AG04449 (cell line): ENCODE measurements at regions of chr1 and their contacts with region 1.

Region 1: GRCh38 chr1:180863158-180863775 is 49.4 kb upstream of the KIAA1614 start:
- DNase-seq: no peak
- H3K4me3 ChIP-seq: no peak overlapping the region
- CTCF ChIP-seq: peak; percentile 43

Region 2: GRCh38 chr1:180515864-180516388 is 347.3 kb before region 1 on chr1:
- CTCF ChIA-PET with region 1: interaction called, 249 read pairs
- POLR2A ChIA-PET with region 1: interaction called, 4 read pairs
- DNase-seq: no peak
- H3K4me3 ChIP-seq: no peak overlapping the region
- CTCF ChIP-seq: peak; percentile 68

Region 3: DNA sequence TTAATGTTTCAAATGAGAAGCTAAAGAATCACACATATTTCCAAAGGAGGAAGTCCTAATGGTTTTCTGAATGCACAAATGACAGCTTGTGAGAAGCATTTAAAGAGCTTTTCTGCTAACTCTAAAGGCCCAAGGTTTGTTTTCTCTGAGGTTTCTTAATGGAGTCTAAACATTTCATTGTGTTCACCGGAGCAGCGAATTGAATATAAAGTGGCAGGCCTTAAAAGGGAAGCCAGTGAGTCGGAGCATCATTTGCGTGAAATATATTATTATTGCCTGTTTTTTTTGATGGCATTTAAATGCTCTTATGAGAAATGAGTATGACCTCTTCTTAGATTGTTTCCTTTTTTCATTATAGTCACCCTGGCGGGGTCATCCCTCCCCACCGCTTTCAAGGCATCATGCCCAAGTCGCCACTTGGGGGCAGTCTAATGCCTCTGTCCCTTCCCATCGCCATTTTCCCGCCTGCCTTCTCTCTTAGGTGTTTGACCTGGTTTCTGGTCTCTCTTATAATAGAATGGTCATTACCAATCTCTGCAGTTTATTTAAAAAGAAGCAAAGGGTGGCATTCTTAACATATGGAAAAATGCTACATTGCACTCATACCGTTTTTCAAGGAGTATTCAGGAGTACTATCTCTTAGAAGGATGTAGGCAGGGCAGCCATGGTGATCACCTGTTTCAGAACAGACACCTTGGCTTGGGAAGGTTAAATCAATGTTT is 329.8 kb before region 1 on chr1:
- CTCF ChIA-PET with region 1: interaction called, 172 read pairs
- POLR2A ChIA-PET with region 1: no interaction called
- DNase-seq: no peak
- H3K4me3 ChIP-seq: no peak overlapping the region
- CTCF ChIP-seq: peak; percentile 85

Region 4: DNA sequence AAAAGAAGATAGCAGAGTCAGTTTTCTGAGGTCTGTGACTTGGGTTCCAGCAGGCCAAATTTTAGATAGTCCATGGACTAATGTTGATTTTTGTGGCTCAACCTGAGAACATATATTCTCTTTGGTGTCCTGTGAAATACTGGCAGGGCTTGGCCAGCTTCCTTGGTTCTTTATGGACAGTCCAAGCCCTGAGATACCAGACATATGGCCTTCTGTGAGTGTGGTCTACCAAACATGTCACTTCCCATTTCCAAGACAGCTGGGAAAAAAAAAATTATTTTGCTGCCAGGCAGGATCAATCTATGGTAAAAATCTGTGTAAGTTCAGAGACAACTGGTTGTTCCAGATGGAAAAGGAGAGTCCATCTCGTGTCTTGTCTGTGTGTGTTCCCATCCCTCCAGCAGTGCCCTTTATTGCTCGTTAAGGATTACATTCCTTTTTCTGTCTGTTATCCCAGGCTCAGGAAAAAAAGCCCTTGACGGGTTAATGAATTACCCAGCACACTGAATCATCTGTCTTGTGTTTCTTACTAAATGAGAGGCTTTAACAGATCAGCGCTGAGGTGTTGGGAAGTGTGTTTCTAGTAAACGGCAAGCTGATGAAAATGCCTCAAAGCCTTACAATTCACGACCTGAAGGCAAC is 264.8 kb before region 1 on chr1:
- CTCF ChIA-PET with region 1: no interaction called
- POLR2A ChIA-PET with region 1: no interaction called
- DNase-seq: no peak
- H3K4me3 ChIP-seq: no peak overlapping the region
- CTCF ChIP-seq: no peak

Region 5: DNA sequence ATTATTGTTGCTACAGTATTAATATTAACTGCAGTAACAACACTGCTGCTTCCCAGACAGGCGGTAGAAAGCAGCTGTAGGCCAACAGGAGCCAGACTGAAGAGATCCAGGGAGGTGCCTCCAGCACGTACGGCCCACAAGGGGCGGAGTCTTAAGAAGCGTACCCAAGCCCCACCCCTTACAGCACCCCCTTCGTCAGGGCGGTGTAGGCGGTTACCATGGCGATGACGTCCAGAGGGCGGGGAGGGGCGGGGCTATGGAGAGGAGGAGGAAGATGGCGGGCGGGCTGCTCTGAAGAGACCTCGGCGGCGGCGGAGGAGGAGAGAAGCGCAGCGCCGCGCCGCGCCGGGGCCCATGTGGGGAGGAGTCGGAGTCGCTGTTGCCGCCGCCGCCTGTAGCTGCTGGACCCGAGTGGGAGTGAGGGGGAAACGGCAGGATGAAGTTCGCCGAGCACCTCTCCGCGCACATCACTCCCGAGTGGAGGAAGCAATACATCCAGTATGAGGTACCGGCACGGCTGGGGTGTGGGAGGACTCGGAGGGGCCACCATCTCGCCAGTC is 231.4 kb before region 1 on chr1 and contains the start of gene XPR1:
- CTCF ChIA-PET with region 1: interaction called, 62 read pairs
- POLR2A ChIA-PET with region 1: no interaction called
- DNase-seq: peak; percentile 94
- H3K4me3 ChIP-seq: peak within 1 kb of the TSS; percentile 96
- CTCF ChIP-seq: peak; percentile 35

Region 6: GRCh38 chr1:180674603-180675530 is 188.4 kb before region 1 on chr1:
- CTCF ChIA-PET with region 1: no interaction called
- POLR2A ChIA-PET with region 1: no interaction called
- DNase-seq: no peak
- H3K4me3 ChIP-seq: no peak overlapping the region
- CTCF ChIP-seq: no peak

Region 7: DNA sequence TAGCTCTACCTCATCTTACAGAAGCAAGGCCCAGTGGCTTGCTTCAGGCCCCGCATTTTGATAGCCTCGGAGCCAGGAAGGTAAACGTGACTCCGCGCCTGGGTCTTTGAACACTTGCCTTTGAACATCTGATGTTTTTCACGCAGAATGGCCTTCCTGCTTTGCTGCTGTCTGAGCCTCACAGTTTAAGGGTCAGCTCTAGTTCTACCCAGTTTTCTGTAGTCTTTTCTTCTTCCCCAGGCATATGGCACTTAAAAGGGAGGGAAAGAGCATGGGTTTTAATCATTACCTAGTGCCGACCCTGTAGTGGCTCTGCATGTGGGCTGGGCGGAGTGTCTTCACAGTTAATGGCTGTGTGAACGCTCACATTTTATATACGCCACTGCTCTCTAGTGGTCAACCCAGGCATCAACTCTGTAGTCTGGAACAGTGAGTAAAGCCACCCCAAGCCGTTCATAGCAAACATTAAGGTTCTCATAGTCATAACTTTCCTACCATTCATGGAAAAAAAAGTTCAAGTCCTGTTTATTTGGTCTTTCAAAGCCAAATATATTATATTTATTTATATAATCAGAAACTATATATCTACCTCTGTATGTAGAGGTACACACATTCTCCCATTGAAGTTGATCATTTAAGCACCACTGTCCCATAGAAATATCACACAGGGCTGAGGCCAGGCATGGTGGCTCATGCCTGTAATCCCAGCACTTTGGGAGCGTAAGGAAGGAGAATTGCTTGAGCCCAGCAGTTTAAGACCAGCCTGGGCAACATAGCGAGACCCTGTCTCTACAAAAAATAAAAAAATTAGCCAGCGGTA is 303.3 kb after region 1 on chr1:
- CTCF ChIA-PET with region 1: interaction called, 10 read pairs
- POLR2A ChIA-PET with region 1: no interaction called
- DNase-seq: peak; percentile 12
- H3K4me3 ChIP-seq: no peak overlapping the region
- CTCF ChIP-seq: peak; percentile 78